CD8-positive, alpha-beta memory T cell (primary cell): ENCODE measurements at regions of chr18 and their contacts with region 1.

Region 1: GRCh38 chr18:63410792-63411191 is 11.5 kb downstream of the VPS4B start:
- DNase-seq: no peak
- H3K4me3 ChIP-seq: no peak overlapping the region
- H3K4me3 Mint-ChIP-seq: no peak overlapping the region
- H3K27ac ChIP-seq: no peak overlapping the region
- H3K27ac Mint-ChIP-seq: peak overlapping the region in 2 of 8 donors; percentile 30 to 76
- H3K4me1 ChIP-seq: peaks cover 24% of the 10 kb centered on the region
- H3K4me1 Mint-ChIP-seq: peaks cover 56 to 86% (median 64%) of the 10 kb centered on the region in 3 donors
- H3K27me3 ChIP-seq: no peaks in the 10 kb centered on the region
- H3K27me3 Mint-ChIP-seq: no peaks in the 10 kb centered on the region

Region 2: GRCh38 chr18:63387861-63388260 is 22.9 kb before region 1 on chr18:
- CTCF ChIA-PET with region 1: no interaction called
- POLR2A ChIA-PET with region 1: no interaction called
- DNase-seq: no peak
- H3K4me3 ChIP-seq: no peak overlapping the region
- H3K4me3 Mint-ChIP-seq: no peak overlapping the region
- H3K27ac ChIP-seq: no peak overlapping the region
- H3K27ac Mint-ChIP-seq: peak overlapping the region in 2 of 8 donors; percentile 0 to 32
- H3K4me1 ChIP-seq: no peaks in the 10 kb centered on the region
- H3K4me1 Mint-ChIP-seq: no peaks in the 10 kb centered on the region
- H3K27me3 ChIP-seq: no peaks in the 10 kb centered on the region
- H3K27me3 Mint-ChIP-seq: no peaks in the 10 kb centered on the region

Region 3: DNA sequence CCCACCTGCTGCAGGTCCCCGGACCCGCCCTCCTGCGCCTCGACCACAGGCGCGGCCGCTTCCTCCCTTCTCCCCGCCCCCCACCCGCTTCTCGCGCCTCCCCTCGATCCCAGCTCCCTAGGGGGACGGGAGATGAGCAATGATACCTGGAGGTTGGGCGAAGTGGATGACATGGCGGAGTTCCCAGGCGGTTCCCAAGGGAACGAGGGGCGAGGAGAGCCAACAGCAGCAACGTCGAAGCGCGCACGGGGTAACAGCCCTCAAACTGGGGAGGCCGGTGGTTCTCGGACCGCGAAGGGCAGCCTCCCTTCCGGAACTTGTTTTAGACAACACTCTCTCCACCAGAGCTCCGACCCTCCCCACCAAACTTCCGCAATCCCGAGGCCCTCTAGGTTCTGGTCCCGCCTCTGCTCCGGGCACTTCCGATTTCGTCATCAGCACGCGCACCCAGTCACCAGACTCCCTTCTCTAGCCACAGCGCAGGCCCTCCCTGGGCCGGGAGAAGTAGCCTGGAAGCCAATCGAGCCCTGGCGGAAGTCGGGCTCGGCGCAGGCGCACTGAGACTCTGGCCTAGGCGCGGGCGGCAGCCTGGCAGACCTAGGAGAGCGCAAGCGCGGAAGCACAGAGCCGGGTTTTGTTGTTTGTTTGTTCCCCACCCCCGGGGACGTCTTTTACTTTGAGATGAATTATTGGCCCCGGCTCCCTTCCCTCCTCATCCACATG is 11.5 kb after region 1 on chr18 and contains the start of gene VPS4B:
- CTCF ChIA-PET with region 1: no interaction called
- POLR2A ChIA-PET with region 1: interaction called, 10 read pairs
- DNase-seq: peak; percentile 99 to 100 (median 100)
- H3K4me3 ChIP-seq: peak within 1 kb of the TSS; percentile 97
- H3K4me3 Mint-ChIP-seq: peak within 1 kb of the TSS; percentile 88 to 100 (median 97)
- H3K27ac ChIP-seq: peak within 1 kb of the TSS; percentile 97
- H3K27ac Mint-ChIP-seq: peak within 1 kb of the TSS; percentile 91 to 99 (median 98)
- H3K4me1 ChIP-seq: peaks cover 33% of the 10 kb centered on the region
- H3K4me1 Mint-ChIP-seq: peaks cover 25 to 34% (median 28%) of the 10 kb centered on the region in 3 donors
- H3K27me3 ChIP-seq: no peaks in the 10 kb centered on the region
- H3K27me3 Mint-ChIP-seq: peaks cover 2 to 9% of the 10 kb centered on the region in 2 donors
- total RNA-seq, gene VPS4B: 60.8 to 61.9 TPM

Region 4: GRCh38 chr18:63445037-63445436 is 34.2 kb after region 1 on chr18:
- CTCF ChIA-PET with region 1: no interaction called
- POLR2A ChIA-PET with region 1: no interaction called
- DNase-seq: no peak
- H3K4me3 ChIP-seq: no peak overlapping the region
- H3K4me3 Mint-ChIP-seq: no peak overlapping the region
- H3K27ac ChIP-seq: no peak overlapping the region
- H3K27ac Mint-ChIP-seq: no peak overlapping the region
- H3K4me1 ChIP-seq: no peaks in the 10 kb centered on the region
- H3K4me1 Mint-ChIP-seq: no peaks in the 10 kb centered on the region
- H3K27me3 ChIP-seq: no peaks in the 10 kb centered on the region
- H3K27me3 Mint-ChIP-seq: no peaks in the 10 kb centered on the region